Calu3 (cell line): ENCODE measurements at regions of chr6 and their contacts with region 1.

Region 1: GRCh38 chr6:167571550-167571949 is 246.7 kb downstream of the TTLL2 start:
- DNase-seq: no peak
- H3K4me3 Mint-ChIP-seq: no peak overlapping the region
- H3K27ac Mint-ChIP-seq: no peak overlapping the region
- H3K4me1 Mint-ChIP-seq: peaks cover 15% of the 10 kb centered on the region
- H3K27me3 Mint-ChIP-seq: no peaks in the 10 kb centered on the region
- CTCF ChIP-seq: no peak

Region 2: GRCh38 chr6:167485186-167485978 is 86.2 kb before region 1 on chr6:
- CTCF ChIA-PET with region 1: no interaction called
- intact Hi-C with region 1: no loop called
- DNase-seq: peak; percentile 32
- H3K4me3 Mint-ChIP-seq: no peak overlapping the region
- H3K27ac Mint-ChIP-seq: no peak overlapping the region
- H3K4me1 Mint-ChIP-seq: no peaks in the 10 kb centered on the region
- H3K27me3 Mint-ChIP-seq: peaks cover 33% of the 10 kb centered on the region
- CTCF ChIP-seq: peak; percentile 34

Region 3: DNA sequence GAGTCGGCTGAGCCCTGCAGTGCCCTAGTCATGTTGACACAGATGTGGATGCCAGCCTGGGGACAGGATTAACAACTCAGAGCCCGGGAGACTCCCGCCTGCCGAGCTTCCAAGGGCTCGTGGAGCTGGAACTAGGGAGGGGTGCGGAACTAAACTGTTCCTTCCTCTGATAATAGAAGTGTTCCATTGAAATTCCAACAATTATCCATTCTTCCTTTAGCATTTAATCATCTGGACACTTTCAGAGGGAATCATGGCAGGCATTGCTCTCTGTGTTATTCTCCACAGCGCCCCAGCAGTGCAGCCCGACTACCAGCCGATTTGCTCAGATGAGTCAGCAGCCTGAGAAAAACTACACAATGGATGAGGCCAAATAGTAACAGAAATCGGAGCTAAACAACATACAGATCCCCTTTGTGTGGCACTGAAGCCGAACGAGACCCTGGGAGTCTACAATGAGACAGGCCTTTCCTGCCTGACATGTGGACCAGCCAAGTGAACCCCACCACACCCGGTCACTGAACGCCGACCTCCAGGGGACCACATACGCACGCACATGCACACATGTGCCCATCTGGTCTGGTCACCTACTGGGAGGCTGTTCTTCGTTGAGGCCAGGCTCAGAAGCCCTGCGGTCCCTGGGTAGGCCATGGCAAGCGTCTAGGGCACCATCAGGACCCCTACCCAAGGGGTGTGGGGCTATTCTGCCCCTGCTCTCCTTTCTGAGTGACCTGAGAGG is 16.8 kb after region 1 on chr6:
- CTCF ChIA-PET with region 1: interaction called, 12 read pairs
- intact Hi-C with region 1: no loop called
- DNase-seq: no peak
- H3K4me3 Mint-ChIP-seq: no peak overlapping the region
- H3K27ac Mint-ChIP-seq: no peak overlapping the region
- H3K4me1 Mint-ChIP-seq: no peaks in the 10 kb centered on the region
- H3K27me3 Mint-ChIP-seq: peaks cover 23% of the 10 kb centered on the region
- CTCF ChIP-seq: no peak